Activated CD4-positive, alpha-beta T cell treated with anti-CD3 and anti-CD28 coated beads for 36 hours (primary cell): ENCODE measurements at regions of chr9 and their contacts with region 1.

Region 1: GRCh38 chr9:20242510-20243189 is 379.6 kb downstream of the MLLT3 start:
- DNase-seq: peak; percentile 30
- ATAC-seq: peak; percentile 82
- H3K4me3 Mint-ChIP-seq: peak overlapping the region; percentile 4
- H3K27ac Mint-ChIP-seq: no peak overlapping the region
- H3K4me1 Mint-ChIP-seq: peaks cover 44% of the 10 kb centered on the region
- H3K27me3 Mint-ChIP-seq: peaks cover 19% of the 10 kb centered on the region

Region 2: GRCh38 chr9:20197976-20198685 is 44.5 kb before region 1 on chr9:
- CTCF ChIA-PET with region 1: no interaction called
- POLR2A ChIA-PET with region 1: no interaction called
- intact Hi-C with region 1: loop called in 1 of 2 experiments (anchors 10 kb)
- DNase-seq: no peak
- ATAC-seq: no peak
- H3K4me3 Mint-ChIP-seq: no peak overlapping the region
- H3K27ac Mint-ChIP-seq: no peak overlapping the region
- H3K4me1 Mint-ChIP-seq: peaks cover 7% of the 10 kb centered on the region
- H3K27me3 Mint-ChIP-seq: peaks cover 4% of the 10 kb centered on the region